ENCODE measurements at regions of chr2 and their contacts with region 1.

Region 1: DNA sequence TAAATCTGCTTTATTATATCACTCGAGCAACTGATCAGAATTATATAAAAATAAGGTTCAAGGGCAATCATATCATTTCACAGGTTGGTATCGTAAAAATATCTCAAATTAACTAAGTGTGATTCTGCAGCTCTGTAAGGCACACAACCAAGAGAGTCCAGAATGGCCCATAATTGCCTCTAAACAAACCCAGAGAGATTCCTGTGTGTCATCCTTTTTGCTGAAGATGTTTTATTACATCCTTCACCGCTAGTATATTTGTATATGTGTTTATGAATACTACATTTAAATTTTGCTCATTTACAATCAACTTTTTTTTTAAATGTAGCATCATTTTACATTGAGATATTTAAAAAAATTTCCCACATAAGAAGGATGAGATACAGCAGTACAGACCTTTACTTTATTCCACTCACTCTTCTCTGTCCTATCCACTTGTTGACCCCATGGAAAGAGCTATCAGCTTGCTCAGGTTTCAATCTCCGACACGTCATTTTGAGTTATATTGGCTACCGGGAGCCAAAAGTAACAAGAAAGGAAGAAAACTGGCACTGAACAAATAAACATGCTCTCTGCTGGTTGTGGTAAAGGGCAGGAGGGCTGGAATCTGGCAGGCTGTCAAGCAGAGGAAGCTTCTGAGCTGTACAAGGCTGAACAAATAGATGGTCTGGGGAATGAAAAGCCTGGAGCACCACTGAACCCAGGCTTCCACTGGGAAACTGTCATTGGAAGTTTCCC is 23.1 kb downstream of the PLA2R1 start:
- DNase-seq: peak; percentile 100
- H3K4me3 ChIP-seq: no peak overlapping the region
- H3K27ac ChIP-seq: peak overlapping the region; percentile 39
- H3K4me1 ChIP-seq: peaks cover 53% of the 10 kb centered on the region
- H3K27me3 ChIP-seq: no peaks in the 10 kb centered on the region
- CTCF ChIP-seq: no peak
- POLR2A ChIP-seq: peak; percentile 80

Region 2: DNA sequence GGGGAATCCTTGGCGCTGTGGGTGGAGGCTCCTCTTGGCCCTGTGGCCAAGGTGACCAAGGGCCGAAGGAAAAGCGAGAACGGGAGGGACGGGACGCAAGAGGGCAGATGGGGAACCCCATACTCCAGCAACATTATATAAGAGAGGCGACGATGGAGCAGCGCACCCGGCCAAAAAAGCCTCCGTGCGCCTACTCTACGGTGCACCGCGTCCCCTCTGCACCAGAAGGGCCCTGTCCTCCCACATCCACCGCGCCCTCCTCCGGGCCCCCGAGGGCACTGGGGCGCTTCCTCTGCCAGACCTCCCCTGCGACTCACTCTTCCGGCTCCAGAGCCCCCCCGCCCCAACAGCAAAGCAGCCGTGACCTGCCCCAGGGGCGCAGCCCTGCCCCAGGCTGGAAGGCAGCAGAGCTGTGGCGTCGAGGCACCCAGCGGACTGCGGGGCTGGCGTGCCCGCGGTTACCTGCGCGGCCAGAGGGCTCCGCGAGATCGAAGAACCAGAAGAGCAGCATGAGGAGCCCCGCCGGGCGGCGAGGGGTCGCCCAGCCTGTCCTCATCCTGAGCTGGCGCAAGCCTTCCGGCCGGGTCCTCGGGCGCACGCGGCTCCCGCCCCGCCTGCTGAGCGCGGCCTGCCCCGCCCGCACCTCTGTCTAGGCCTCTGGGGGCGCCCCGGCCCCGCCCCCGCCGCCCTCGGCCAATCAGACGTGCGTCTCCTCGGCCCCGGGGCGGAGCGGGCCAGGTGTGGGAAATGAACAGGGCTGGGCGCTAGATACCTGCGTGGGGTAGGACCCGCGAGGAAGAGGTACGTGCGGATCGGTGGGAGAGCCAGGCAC is 135.0 kb before region 1 on chr2:
- CTCF ChIA-PET with region 1: no interaction called
- POLR2A ChIA-PET with region 1: no interaction called
- dilution Hi-C with region 1: no loop called
- intact Hi-C with region 1: no loop called
- DNase-seq: peak; percentile 22
- H3K4me3 ChIP-seq: peak within 1 kb of the TSS; percentile 53 to 71 (median 58)
- H3K27ac ChIP-seq: peak within 1 kb of the TSS; percentile 68
- H3K4me1 ChIP-seq: peaks cover 22% of the 10 kb centered on the region
- H3K27me3 ChIP-seq: no peaks in the 10 kb centered on the region
- CTCF ChIP-seq: no peak
- POLR2A ChIP-seq: no peak

Region 3: DNA sequence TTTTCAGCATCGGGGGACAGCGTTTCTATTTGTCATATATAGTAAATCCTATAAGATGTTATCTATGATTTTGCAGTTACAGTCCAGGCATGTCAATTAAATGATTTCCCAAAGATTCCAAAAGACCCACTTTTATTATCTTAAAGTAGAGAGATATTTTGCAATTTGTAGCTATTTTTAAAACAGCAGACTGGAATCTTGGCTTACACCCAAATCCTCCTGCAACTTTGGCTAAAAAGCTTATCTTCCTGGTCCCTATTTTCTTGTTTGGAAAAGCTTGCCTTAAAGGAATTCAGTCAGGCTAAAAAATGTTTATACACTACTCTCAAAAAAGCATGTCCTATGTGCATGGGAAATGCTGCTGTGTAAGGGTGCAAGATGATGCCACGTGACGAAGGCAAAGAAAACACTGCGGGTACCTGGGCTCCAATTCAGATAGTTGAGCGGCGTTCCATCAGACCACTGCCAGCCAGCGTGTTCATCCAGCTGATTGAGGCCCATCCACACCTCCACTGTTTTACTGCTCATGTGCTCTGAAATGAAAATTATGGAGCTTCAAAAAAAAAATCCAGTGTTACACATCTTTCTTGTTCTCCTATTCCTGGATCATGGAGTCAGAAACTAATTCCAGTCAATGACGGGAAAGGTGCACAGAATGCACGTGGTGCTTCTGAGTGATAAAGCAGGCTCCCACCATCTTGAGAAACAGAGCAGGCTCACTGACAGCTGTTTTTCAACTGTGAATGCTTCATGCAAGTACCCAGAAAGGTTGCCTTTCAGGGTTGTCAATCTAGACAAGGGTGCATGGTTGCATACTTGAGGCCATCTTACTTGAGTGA is 10.7 kb before region 1 on chr2:
- CTCF ChIA-PET with region 1: interaction called, 12 read pairs
- POLR2A ChIA-PET with region 1: no interaction called
- dilution Hi-C with region 1: no loop called
- intact Hi-C with region 1: no loop called
- DNase-seq: peak; percentile 62
- H3K4me3 ChIP-seq: no peak overlapping the region
- H3K27ac ChIP-seq: no peak overlapping the region
- H3K4me1 ChIP-seq: peaks cover 10% of the 10 kb centered on the region
- H3K27me3 ChIP-seq: no peaks in the 10 kb centered on the region
- CTCF ChIP-seq: no peak
- POLR2A ChIP-seq: no peak

Region 4: GRCh38 chr2:160052531-160052930 is 13.2 kb after region 1 on chr2:
- CTCF ChIA-PET with region 1: interaction called, 6 read pairs
- POLR2A ChIA-PET with region 1: no interaction called
- dilution Hi-C with region 1: no loop called
- intact Hi-C with region 1: loop called (anchors 1 kb)
- DNase-seq: peak; percentile 39
- H3K4me3 ChIP-seq: no peak overlapping the region
- H3K27ac ChIP-seq: peak overlapping the region; percentile 52
- H3K4me1 ChIP-seq: peaks cover 25% of the 10 kb centered on the region
- H3K27me3 ChIP-seq: no peaks in the 10 kb centered on the region
- CTCF ChIP-seq: no peak
- POLR2A ChIP-seq: no peak

Region 5: DNA sequence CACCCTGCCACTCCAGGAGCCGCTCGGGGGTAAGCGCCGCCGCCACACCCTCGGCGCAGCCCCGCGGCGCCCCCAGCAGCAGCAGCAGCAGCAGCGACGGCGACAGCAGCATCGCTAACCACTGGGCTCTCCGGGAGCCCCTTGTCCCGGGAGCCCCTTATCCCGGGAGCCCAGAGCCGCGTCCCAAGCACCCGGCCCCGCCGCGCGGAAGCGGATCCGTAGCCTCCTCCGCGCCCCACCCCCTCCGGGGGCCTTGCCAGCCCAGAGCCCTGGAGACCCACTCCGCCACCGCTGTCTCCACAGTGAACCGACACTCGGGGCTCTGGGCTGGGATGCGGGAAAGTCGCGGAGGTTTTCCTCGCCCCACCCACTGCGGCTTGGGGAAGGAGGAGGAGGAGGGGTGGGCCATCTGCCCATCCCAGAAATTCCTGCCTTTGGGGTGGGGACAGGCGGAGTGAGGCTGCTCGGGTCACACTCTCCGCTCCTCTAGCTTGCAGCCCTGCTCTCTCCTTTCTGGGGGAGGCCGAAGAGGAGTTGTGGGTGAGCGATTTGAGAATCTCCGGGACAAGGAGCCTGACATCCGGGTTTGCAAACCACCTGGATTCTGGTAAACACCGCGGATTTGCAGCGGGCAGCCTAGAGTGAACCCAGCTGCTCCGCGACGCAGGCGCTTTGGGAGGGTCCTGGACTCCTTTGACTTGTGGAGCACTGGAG is 23.1 kb after region 1 on chr2 and contains the start of gene PLA2R1:
- CTCF ChIA-PET with region 1: interaction called, 3 read pairs
- POLR2A ChIA-PET with region 1: no interaction called
- dilution Hi-C with region 1: no loop called
- intact Hi-C with region 1: loop called (anchors 1 kb)
- DNase-seq: peak; percentile 49
- H3K4me3 ChIP-seq: peak within 1 kb of the TSS; percentile 60 to 78 (median 75)
- H3K27ac ChIP-seq: peak within 1 kb of the TSS; percentile 19
- H3K4me1 ChIP-seq: peaks cover 18% of the 10 kb centered on the region
- H3K27me3 ChIP-seq: no peaks in the 10 kb centered on the region
- CTCF ChIP-seq: no peak
- POLR2A ChIP-seq: peak; percentile 44
- total RNA-seq, gene PLA2R1: 14.4 and 15.6 TPM in 2 replicates

Measured in endothelial cell of umbilical vein (primary cell).